Heart left ventricle (tissue), 16 donors: ENCODE measurements at regions of chr22 and their contacts with region 1.

Region 1: GRCh38 chr22:39502109-39502788 is at the start of gene MIEF1:
- DNase-seq: peak; percentile 98 to 99 (median 98)
- ATAC-seq: peak; percentile 96 to 98 (median 97)
- H3K4me3 ChIP-seq: peak within 1 kb of the TSS; percentile 76 to 100 (median 96)
- H3K27ac ChIP-seq: peak within 1 kb of the TSS; percentile 63 to 96 (median 92)
- H3K4me1 ChIP-seq: peaks cover 14 to 68% (median 48%) of the 10 kb centered on the region in 12 donors
- H3K27me3 ChIP-seq: no peaks in the 10 kb centered on the region
- CTCF ChIP-seq: no peak
- POLR2A ChIP-seq: peak in 1 of 2 donors; percentile 41
- total RNA-seq, gene MIEF1: 15.4 to 25.2 (median 18.7) TPM

Region 2: GRCh38 chr22:39395936-39396796 is 106.1 kb before region 1 on chr22:
- intact Hi-C with region 1: loop called in 4 of 10 experiments (anchors 5 kb)
- DNase-seq: peak in 1 of 5 donors; percentile 40
- ATAC-seq: no peak
- H3K4me3 ChIP-seq: no peak overlapping the region
- H3K27ac ChIP-seq: no peak overlapping the region
- H3K4me1 ChIP-seq: peaks cover 0 to 15% (median 10%) of the 10 kb centered on the region in 12 donors
- H3K27me3 ChIP-seq: no peaks in the 10 kb centered on the region
- CTCF ChIP-seq: no peak
- POLR2A ChIP-seq: no peak

Region 3: GRCh38 chr22:39405346-39406085 is 96.7 kb before region 1 on chr22:
- intact Hi-C with region 1: loop called in 2 of 10 experiments (anchors 5 kb)
- DNase-seq: peak in 1 of 5 donors; percentile 26
- ATAC-seq: peak; percentile 34 to 64 (median 62)
- H3K4me3 ChIP-seq: peak overlapping the region in 5 of 12 donors; percentile 12 to 32 (median 22)
- H3K27ac ChIP-seq: peak overlapping the region in 5 of 12 donors; percentile 3 to 51 (median 28)
- H3K4me1 ChIP-seq: peaks cover 0 to 44% (median 20%) of the 10 kb centered on the region in 12 donors
- H3K27me3 ChIP-seq: no peaks in the 10 kb centered on the region
- CTCF ChIP-seq: peak in 1 of 12 donors; percentile 17
- POLR2A ChIP-seq: no peak

Region 4: DNA sequence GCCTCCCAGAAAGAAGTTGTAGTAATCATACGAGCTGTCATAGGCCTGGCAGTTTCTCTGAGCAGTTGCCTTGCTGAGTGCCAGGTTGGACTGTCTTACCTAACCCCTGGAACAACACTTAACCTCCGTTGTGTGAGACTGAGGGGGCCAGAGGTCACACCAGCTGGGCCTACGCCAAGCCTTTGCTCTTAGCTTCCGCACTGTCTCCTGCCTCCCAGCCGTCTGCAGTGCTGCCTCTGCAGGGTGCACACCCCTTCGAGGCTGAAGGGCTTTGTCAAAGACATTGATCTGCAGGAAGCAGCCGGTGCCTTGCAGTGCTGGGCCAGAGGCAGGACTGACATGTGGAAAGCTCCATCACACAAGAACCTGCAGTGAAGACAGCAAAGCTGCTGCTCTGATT is 85.9 kb before region 1 on chr22:
- intact Hi-C with region 1: no loop called
- DNase-seq: no peak
- ATAC-seq: no peak
- H3K4me3 ChIP-seq: no peak overlapping the region
- H3K27ac ChIP-seq: no peak overlapping the region
- H3K4me1 ChIP-seq: peaks cover 0 to 34% (median 15%) of the 10 kb centered on the region in 12 donors
- H3K27me3 ChIP-seq: no peaks in the 10 kb centered on the region
- CTCF ChIP-seq: no peak
- POLR2A ChIP-seq: no peak

Region 5: GRCh38 chr22:39439170-39439569 is 63.1 kb before region 1 on chr22:
- intact Hi-C with region 1: loop called in 1 of 10 experiments (anchors 10 kb)
- DNase-seq: no peak
- ATAC-seq: no peak
- H3K4me3 ChIP-seq: no peak overlapping the region
- H3K27ac ChIP-seq: no peak overlapping the region
- H3K4me1 ChIP-seq: peaks cover 0 to 24% (median 13%) of the 10 kb centered on the region in 12 donors
- H3K27me3 ChIP-seq: peaks cover 0 to 9% (median 0%) of the 10 kb centered on the region in 9 donors
- CTCF ChIP-seq: no peak
- POLR2A ChIP-seq: no peak